Heart left ventricle (tissue), 16 donors: ENCODE measurements at regions of chr22 and their contacts with region 1.

Region 1: DNA sequence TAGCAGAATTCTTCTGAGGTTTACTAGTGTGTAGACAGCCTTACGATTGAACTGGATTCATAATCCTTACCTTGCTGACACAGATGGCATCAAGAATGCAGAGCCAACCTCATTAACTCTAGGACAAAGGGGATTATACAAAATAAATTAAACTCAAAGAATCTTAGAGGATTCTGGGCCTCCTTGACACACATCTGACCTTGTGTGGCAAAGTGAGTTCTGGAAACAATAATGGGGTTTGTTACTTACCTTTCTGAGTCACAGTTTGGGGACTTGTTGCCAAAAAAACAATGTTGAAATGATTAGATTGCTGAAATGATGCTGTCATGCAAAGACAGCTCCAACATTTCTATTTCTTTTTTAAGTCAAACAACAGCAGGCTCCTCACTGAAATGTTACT is 179.1 kb upstream of the ISX start:
- DNase-seq: no peak
- ATAC-seq: no peak
- H3K4me3 ChIP-seq: no peak overlapping the region
- H3K27ac ChIP-seq: no peak overlapping the region
- H3K4me1 ChIP-seq: no peaks in the 10 kb centered on the region
- H3K27me3 ChIP-seq: no peaks in the 10 kb centered on the region
- CTCF ChIP-seq: no peak
- POLR2A ChIP-seq: no peak

Region 2: DNA sequence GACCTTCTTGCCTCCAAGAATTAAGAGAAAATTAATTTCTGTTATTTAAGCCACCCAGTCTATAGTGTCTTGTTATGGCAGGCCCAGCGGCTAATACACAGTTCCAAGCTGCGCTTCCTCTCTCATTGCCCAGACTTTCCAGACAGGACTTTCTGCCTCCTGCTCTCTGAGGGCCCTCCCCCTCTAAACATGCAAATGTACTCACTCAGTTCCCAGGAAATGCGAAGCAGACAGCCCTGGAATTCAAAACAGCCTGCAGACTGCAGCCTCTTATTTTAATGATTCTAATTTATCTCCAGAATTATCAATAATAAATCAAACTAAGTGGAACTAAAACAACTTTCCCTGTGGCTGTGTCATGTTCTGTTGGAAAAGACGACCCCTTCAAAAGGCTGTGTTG is 63.7 kb after region 1 on chr22:
- intact Hi-C with region 1: loop called in 1 of 10 experiments (anchors 10 kb)
- DNase-seq: no peak
- ATAC-seq: no peak
- H3K4me3 ChIP-seq: no peak overlapping the region
- H3K27ac ChIP-seq: no peak overlapping the region
- H3K4me1 ChIP-seq: no peaks in the 10 kb centered on the region
- H3K27me3 ChIP-seq: peaks cover 0 to 13% (median 0%) of the 10 kb centered on the region in 9 donors
- CTCF ChIP-seq: no peak
- POLR2A ChIP-seq: no peak